ENCODE measurements at regions of chr2 and their contacts with region 1.

Region 1: GRCh38 chr2:69724540-69725159 is 17.3 kb upstream of the ANXA4 start:
- DNase-seq: peak; percentile 92
- ATAC-seq: peak; percentile 90
- H3K4me3 Mint-ChIP-seq: peak overlapping the region; percentile 70
- H3K27ac Mint-ChIP-seq: no peak overlapping the region
- H3K4me1 Mint-ChIP-seq: no peaks in the 10 kb centered on the region
- H3K27me3 Mint-ChIP-seq: no peaks in the 10 kb centered on the region
- CTCF ChIP-seq: peak; percentile 92

Region 2: GRCh38 chr2:69565431-69565839 is 159.2 kb before region 1 on chr2:
- CTCF ChIA-PET with region 1: interaction called, 30 read pairs
- POLR2A ChIA-PET with region 1: no interaction called
- DNase-seq: peak; percentile 91
- ATAC-seq: peak; percentile 96
- H3K4me3 Mint-ChIP-seq: no peak overlapping the region
- H3K27ac Mint-ChIP-seq: no peak overlapping the region
- H3K4me1 Mint-ChIP-seq: peaks cover 11% of the 10 kb centered on the region; the same call in 1 of the 2 replicates
- H3K27me3 Mint-ChIP-seq: no peaks in the 10 kb centered on the region
- CTCF ChIP-seq: peak; percentile 87

Region 3: GRCh38 chr2:69625078-69625795 is 99.4 kb before region 1 on chr2:
- CTCF ChIA-PET with region 1: no interaction called
- POLR2A ChIA-PET with region 1: no interaction called
- DNase-seq: no peak
- ATAC-seq: no peak
- H3K4me3 Mint-ChIP-seq: no peak overlapping the region
- H3K27ac Mint-ChIP-seq: no peak overlapping the region
- H3K4me1 Mint-ChIP-seq: peaks cover 6% of the 10 kb centered on the region
- H3K27me3 Mint-ChIP-seq: no peaks in the 10 kb centered on the region
- CTCF ChIP-seq: no peak

Region 4: DNA sequence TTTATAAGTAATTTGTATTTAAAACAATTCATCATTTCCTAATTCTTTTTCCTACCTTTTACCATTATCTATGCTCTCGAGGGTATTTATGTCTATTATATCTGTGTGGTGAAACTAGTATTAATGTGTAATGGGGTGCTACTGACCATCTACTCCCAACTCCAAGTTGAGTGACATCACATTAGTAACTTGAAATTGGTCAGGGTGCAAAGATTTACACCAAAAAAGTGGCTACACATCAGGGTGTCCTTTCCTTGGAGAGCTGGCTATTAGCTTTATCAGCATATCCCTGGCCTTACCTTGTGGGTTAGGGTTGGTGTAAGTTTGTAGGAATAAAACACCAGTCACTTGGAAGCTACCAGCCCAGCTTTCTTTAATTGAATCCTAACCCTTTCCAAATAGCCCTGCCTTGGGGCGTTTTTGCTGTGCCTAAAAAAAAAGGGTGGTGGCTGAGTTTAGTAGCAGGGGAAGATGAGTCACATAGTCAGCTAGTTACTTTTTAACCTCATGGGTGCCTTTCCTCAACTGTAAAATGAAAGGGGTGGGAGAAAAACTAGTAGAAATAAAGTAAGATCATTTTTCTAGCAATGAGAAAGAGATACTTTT is 31.3 kb after region 1 on chr2:
- CTCF ChIA-PET with region 1: interaction called, 27 read pairs
- POLR2A ChIA-PET with region 1: no interaction called
- DNase-seq: no peak
- ATAC-seq: no peak
- H3K4me3 Mint-ChIP-seq: no peak overlapping the region
- H3K27ac Mint-ChIP-seq: no peak overlapping the region
- H3K4me1 Mint-ChIP-seq: no peaks in the 10 kb centered on the region
- H3K27me3 Mint-ChIP-seq: no peaks in the 10 kb centered on the region
- CTCF ChIP-seq: no peak

Region 5: GRCh38 chr2:69781321-69782248 is 56.9 kb after region 1 on chr2:
- CTCF ChIA-PET with region 1: interaction called, 21 read pairs
- POLR2A ChIA-PET with region 1: no interaction called
- DNase-seq: no peak
- ATAC-seq: peak; percentile 29; the same call in 1 of the 2 replicates
- H3K4me3 Mint-ChIP-seq: no peak overlapping the region
- H3K27ac Mint-ChIP-seq: peak overlapping the region; percentile 75
- H3K4me1 Mint-ChIP-seq: peaks cover 43% of the 10 kb centered on the region
- H3K27me3 Mint-ChIP-seq: no peaks in the 10 kb centered on the region
- CTCF ChIP-seq: no peak

Region 6: GRCh38 chr2:69804416-69804815 is 79.8 kb after region 1 on chr2:
- CTCF ChIA-PET with region 1: interaction called, 461 read pairs
- POLR2A ChIA-PET with region 1: no interaction called
- DNase-seq: no peak
- ATAC-seq: no peak
- H3K4me3 Mint-ChIP-seq: no peak overlapping the region
- H3K27ac Mint-ChIP-seq: no peak overlapping the region; the same call in 1 of the 2 replicates
- H3K4me1 Mint-ChIP-seq: peaks cover 6% of the 10 kb centered on the region; the same call in 1 of the 2 replicates
- H3K27me3 Mint-ChIP-seq: no peaks in the 10 kb centered on the region
- CTCF ChIP-seq: no peak

Region 7: GRCh38 chr2:69848201-69848770 is 123.6 kb after region 1 on chr2:
- CTCF ChIA-PET with region 1: interaction called, 17 read pairs
- POLR2A ChIA-PET with region 1: no interaction called
- DNase-seq: no peak
- ATAC-seq: no peak
- H3K4me3 Mint-ChIP-seq: no peak overlapping the region
- H3K27ac Mint-ChIP-seq: peak overlapping the region; percentile 66
- H3K4me1 Mint-ChIP-seq: no peaks in the 10 kb centered on the region
- H3K27me3 Mint-ChIP-seq: no peaks in the 10 kb centered on the region
- CTCF ChIP-seq: no peak